CD4-positive, alpha-beta T cell (primary cell): ENCODE measurements at regions of chr10 and their contacts with region 1.

Region 1: GRCh38 chr10:96082153-96082552 is 38.8 kb downstream of the CCNJ start:
- DNase-seq: no peak
- ATAC-seq: no peak
- H3K4me3 ChIP-seq: no peak overlapping the region
- H3K4me3 Mint-ChIP-seq: no peak overlapping the region
- H3K27ac ChIP-seq: no peak overlapping the region
- H3K27ac Mint-ChIP-seq: no peak overlapping the region
- H3K4me1 ChIP-seq: no peaks in the 10 kb centered on the region
- H3K4me1 Mint-ChIP-seq: no peaks in the 10 kb centered on the region
- H3K27me3 ChIP-seq: no peaks in the 10 kb centered on the region
- H3K27me3 Mint-ChIP-seq: no peaks in the 10 kb centered on the region
- CTCF ChIP-seq: no peak

Region 2: GRCh38 chr10:94251568-94251967 is 1830.6 kb before region 1 on chr10:
- CTCF ChIA-PET with region 1: no interaction called
- POLR2A ChIA-PET with region 1: no interaction called
- intact Hi-C with region 1: no loop called
- DNase-seq: no peak
- ATAC-seq: no peak
- H3K4me3 ChIP-seq: no peak overlapping the region
- H3K4me3 Mint-ChIP-seq: no peak overlapping the region
- H3K27ac ChIP-seq: no peak overlapping the region
- H3K27ac Mint-ChIP-seq: no peak overlapping the region
- H3K4me1 ChIP-seq: no peaks in the 10 kb centered on the region
- H3K4me1 Mint-ChIP-seq: no peaks in the 10 kb centered on the region
- H3K27me3 ChIP-seq: no peaks in the 10 kb centered on the region
- H3K27me3 Mint-ChIP-seq: peaks cover 52% of the 10 kb centered on the region
- CTCF ChIP-seq: no peak

Region 3: DNA sequence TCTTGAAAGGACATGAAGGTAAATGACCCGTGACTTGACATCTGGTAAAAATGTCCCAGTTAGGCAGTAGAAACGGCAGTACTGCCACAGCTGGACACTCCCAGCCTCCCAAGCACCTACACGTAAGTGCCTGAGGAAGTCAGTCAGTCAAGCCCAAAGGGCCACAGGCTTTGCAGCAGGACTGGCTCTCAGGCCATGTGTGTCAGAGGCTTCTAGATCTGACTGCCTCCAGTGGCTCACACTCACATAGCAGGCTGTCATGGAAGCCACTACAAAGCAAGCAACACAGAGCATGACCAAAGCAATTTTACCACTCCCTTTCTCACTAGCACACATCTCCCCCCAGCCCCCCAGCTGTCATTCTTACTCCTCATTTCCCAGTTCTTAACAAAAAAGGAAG is 56.6 kb before region 1 on chr10:
- CTCF ChIA-PET with region 1: no interaction called
- POLR2A ChIA-PET with region 1: no interaction called
- intact Hi-C with region 1: no loop called
- DNase-seq: peak in 2 of 14 experiments; percentile 5 to 13
- ATAC-seq: no peak
- H3K4me3 ChIP-seq: no peak overlapping the region
- H3K4me3 Mint-ChIP-seq: no peak overlapping the region
- H3K27ac ChIP-seq: no peak overlapping the region
- H3K27ac Mint-ChIP-seq: no peak overlapping the region
- H3K4me1 ChIP-seq: no peaks in the 10 kb centered on the region
- H3K4me1 Mint-ChIP-seq: no peaks in the 10 kb centered on the region
- H3K27me3 ChIP-seq: no peaks in the 10 kb centered on the region
- H3K27me3 Mint-ChIP-seq: no peaks in the 10 kb centered on the region
- CTCF ChIP-seq: no peak

Region 4: DNA sequence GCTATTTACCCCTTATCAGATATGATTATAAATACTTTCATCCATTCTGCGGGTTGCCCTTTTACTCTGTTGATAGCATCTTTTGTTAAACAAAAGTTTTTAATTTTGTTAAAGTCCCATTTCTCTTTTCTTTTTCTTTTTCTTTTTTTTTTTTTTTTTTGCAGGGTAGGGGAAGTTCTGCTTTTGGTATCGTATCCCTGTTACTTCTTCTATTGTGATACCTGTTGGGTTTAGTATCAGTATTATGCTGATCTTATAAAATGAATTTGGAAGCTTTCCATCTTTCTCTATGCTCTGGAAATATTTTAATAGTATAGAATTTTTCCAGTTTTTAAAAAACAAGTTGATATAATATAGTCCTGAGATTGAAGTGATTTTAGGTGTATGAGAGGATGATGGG is 32.8 kb before region 1 on chr10:
- CTCF ChIA-PET with region 1: no interaction called
- POLR2A ChIA-PET with region 1: no interaction called
- intact Hi-C with region 1: loop called in 1 of 2 experiments (anchors 2 kb)
- DNase-seq: no peak
- ATAC-seq: no peak
- H3K4me3 ChIP-seq: no peak overlapping the region
- H3K4me3 Mint-ChIP-seq: no peak overlapping the region
- H3K27ac ChIP-seq: no peak overlapping the region
- H3K27ac Mint-ChIP-seq: no peak overlapping the region
- H3K4me1 ChIP-seq: peaks cover 7% of the 10 kb centered on the region
- H3K4me1 Mint-ChIP-seq: peaks cover 88% of the 10 kb centered on the region
- H3K27me3 ChIP-seq: no peaks in the 10 kb centered on the region
- H3K27me3 Mint-ChIP-seq: no peaks in the 10 kb centered on the region
- CTCF ChIP-seq: no peak

Region 5: GRCh38 chr10:96470116-96470743 is 388.1 kb after region 1 on chr10:
- CTCF ChIA-PET with region 1: no interaction called
- POLR2A ChIA-PET with region 1: no interaction called
- intact Hi-C with region 1: no loop called
- DNase-seq: peak in 4 of 14 experiments; percentile 4 to 33 (median 16)
- ATAC-seq: no peak
- H3K4me3 ChIP-seq: no peak overlapping the region
- H3K4me3 Mint-ChIP-seq: no peak overlapping the region
- H3K27ac ChIP-seq: no peak overlapping the region
- H3K27ac Mint-ChIP-seq: no peak overlapping the region
- H3K4me1 ChIP-seq: no peaks in the 10 kb centered on the region
- H3K4me1 Mint-ChIP-seq: no peaks in the 10 kb centered on the region
- H3K27me3 ChIP-seq: peaks cover 5 to 6% of the 10 kb centered on the region in 2 experiments
- H3K27me3 Mint-ChIP-seq: peaks cover 27% of the 10 kb centered on the region
- CTCF ChIP-seq: peak; percentile 15